Heart left ventricle (tissue), 16 donors: ENCODE measurements at regions of chr13 and their contacts with region 1.

Region 1: GRCh38 chr13:97386801-97387484 is 47.0 kb upstream of the RAP2A start:
- DNase-seq: peak in 3 of 5 donors; percentile 32 to 62 (median 54)
- ATAC-seq: peak in 3 of 4 donors; percentile 43 to 67 (median 54)
- H3K4me3 ChIP-seq: no peak overlapping the region
- H3K27ac ChIP-seq: peak overlapping the region in 2 of 12 donors; percentile 31 to 82
- H3K4me1 ChIP-seq: peaks cover 0 to 59% (median 14%) of the 10 kb centered on the region in 12 donors
- H3K27me3 ChIP-seq: no peaks in the 10 kb centered on the region
- CTCF ChIP-seq: no peak
- POLR2A ChIP-seq: no peak

Region 2: DNA sequence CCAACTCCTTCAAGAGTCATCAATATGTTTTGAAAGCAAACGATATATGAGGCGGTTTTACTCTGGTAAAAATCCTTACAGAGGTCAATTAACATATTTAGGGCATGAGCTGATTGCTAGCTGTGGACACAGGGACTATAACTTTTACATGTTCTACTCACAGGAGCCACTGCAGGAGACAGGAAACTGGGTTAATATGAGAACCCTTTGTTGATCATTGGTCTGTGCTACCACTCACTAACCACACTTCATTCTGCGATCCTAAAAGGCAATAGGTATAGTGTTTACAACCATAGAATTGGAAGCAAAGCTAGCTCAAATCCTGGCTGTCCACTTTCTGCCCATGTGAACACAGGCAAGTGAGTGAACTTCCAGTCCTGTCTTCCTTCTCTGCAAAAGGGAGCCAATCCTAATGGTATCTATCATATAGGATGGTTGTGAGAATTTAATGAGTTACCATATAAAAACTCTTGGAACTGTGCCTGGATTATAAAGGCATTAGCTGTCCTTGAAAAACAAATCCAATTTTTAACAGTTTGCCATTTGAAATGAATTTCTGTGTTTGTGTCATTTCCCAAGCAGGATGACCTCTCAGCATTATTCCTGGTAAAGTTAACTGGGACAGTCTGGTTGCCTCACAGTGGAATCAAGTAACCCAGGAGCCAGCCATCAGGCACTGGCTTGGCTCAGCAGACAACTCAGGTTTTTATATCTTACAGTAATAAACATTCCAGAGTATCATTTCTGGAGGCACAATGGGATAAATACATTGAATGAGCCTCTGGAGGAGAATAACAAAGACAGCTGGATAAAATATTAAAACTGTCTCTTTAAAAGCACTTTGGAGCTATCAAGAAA is 17.2 kb after region 1 on chr13:
- intact Hi-C with region 1: no loop called
- DNase-seq: no peak
- ATAC-seq: no peak
- H3K4me3 ChIP-seq: no peak overlapping the region
- H3K27ac ChIP-seq: no peak overlapping the region
- H3K4me1 ChIP-seq: peaks cover 0 to 4% (median 0%) of the 10 kb centered on the region in 12 donors
- H3K27me3 ChIP-seq: no peaks in the 10 kb centered on the region
- CTCF ChIP-seq: no peak
- POLR2A ChIP-seq: no peak

Region 3: DNA sequence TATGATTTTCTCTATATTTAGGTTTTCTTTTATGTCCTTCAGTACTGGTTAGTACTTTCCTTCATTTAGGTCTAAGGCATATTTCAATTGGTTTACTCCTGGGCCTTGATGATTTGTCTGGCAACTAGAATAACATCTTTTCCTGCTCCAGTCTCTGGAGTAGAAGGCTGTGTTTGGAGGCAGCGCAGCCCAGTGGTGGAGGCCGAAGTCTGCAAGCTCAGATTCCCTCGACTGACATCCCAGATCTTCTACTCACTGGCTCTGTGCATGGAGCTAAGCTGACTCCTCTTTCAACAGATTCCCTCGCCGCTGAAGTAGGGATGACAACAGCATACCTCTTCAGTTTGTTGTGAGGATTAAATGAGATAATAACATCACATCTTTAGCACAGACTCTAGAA is 188.0 kb after region 1 on chr13:
- intact Hi-C with region 1: loop called in 1 of 10 experiments (anchors 10 kb)
- DNase-seq: peak in 3 of 5 donors; percentile 16 to 26 (median 24)
- ATAC-seq: peak; percentile 20 to 56 (median 44)
- H3K4me3 ChIP-seq: no peak overlapping the region
- H3K27ac ChIP-seq: no peak overlapping the region
- H3K4me1 ChIP-seq: peaks cover 0 to 8% (median 0%) of the 10 kb centered on the region in 12 donors
- H3K27me3 ChIP-seq: no peaks in the 10 kb centered on the region
- CTCF ChIP-seq: peak; percentile 13 to 62 (median 41)
- POLR2A ChIP-seq: no peak